ENCODE measurements at regions of chr12 and their contacts with region 1.

Region 1: GRCh38 chr12:153080-153746 is 60.7 kb downstream of the SLC6A12 start:
- DNase-seq: peak; percentile 79 to 90
- ATAC-seq: peak; percentile 89 to 98
- H3K4me3 ChIP-seq: no peak overlapping the region
- H3K27ac ChIP-seq: no peak overlapping the region
- H3K4me1 ChIP-seq: no peaks in the 10 kb centered on the region
- CTCF ChIP-seq: peak; percentile 76
- EP300 ChIP-seq: no peak
- POLR2A ChIP-seq: no peak
- RAD21 ChIP-seq: peak; percentile 68 to 80

Region 2: DNA sequence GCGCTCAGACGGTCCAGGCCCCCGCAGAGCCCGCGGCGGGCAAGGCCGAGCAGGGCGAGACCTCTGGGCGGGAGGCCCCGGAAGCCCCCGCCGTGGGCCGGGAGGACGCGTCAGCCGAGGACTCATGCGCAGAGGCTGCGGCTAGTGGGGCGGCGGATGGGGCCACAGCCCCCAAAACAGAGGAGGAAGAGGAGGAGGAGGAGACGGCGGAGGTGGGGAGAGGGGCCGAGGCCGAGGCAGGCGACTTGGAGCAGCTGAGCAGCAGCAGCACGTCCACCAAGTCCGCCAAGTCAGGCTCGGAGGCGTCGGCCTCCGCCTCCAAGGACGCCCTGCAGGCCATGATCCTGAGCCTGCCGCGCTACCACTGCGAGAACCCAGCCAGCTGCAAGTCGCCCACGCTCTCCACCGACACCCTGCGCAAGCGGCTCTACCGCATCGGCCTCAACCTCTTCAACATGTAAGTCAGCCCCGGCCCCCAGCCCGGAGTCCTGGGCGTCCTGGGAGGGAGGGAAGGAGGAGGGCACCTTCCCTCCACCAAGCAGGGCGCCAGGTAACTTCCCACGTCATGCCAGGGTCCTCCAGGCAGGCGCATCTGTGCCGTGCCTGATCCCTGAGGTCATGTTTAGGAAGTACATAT is 14.2 kb before region 1 on chr12:
- CTCF ChIA-PET with region 1: interaction called, 22 read pairs
- POLR2A ChIA-PET with region 1: no interaction called
- DNase-seq: no peak
- ATAC-seq: no peak
- H3K4me3 ChIP-seq: no peak overlapping the region
- H3K27ac ChIP-seq: no peak overlapping the region
- H3K4me1 ChIP-seq: no peaks in the 10 kb centered on the region
- CTCF ChIP-seq: no peak
- EP300 ChIP-seq: no peak
- POLR2A ChIP-seq: no peak
- RAD21 ChIP-seq: no peak

Region 3: DNA sequence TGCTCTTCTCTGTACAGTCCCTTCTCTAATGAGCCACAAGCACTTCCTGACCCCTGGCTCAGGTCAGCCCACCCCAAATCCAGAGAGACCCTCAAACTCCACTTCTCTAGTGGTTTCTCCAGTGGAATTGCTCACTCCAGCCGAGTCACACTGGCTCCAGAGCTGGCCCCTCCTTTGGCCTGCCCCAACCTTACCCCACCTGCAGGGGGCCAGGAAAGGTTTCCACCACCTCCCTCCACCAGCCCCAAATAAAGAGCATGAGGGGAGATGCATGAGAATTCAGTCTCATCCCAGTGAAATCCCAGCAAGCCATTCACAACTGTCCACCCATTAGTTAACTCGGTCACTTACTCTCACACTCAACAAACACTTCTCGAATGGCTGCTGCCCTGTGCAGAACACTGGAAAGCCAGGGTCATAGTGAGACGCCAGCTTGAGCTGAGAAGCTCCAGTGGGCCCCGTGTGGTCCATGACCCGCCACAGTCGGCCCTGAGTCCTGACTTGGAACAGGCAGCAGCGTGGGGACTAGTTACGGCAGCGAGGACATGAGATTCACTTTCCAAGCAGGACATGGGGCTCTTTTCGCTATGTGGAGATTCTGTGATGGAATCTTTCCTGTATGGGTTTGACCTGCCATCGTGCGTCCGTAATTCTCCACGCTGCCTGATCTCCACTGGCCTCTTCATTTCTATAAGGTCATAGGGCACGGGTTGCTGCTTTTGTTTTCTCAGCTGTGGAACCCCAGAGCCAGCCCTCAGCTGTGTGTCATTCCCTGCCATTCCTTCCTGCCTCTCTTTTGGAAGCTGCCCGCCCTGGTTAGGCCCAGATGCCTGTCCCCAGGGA is 16.5 kb after region 1 on chr12:
- CTCF ChIA-PET with region 1: interaction called, 17 read pairs
- POLR2A ChIA-PET with region 1: no interaction called
- DNase-seq: no peak
- ATAC-seq: peak; percentile 57 to 74; a peak in 5 of 6 replicates
- H3K4me3 ChIP-seq: no peak overlapping the region
- H3K27ac ChIP-seq: no peak overlapping the region
- H3K4me1 ChIP-seq: no peaks in the 10 kb centered on the region
- CTCF ChIP-seq: no peak
- EP300 ChIP-seq: no peak
- POLR2A ChIP-seq: no peak
- RAD21 ChIP-seq: no peak

Region 4: DNA sequence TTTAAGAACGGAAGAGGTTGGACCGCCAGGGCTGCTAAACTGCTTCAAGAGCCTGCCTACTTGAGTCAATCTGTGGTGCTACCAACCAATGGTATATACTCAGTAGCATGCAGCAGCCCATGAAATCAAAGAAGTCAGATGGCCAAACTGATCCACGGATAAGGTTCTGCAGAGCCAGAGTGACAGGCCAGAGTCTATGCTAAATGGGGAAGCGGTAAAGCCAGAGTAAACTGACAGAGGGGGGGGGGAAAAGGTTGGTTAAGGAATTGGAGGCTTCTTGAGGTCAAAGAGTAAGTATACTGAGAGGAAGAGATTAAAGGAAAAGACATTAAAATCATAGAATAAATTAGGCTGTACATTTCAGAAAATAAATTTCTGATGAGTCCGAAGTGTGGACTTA is 124.8 kb after region 1 on chr12:
- CTCF ChIA-PET with region 1: no interaction called
- POLR2A ChIA-PET with region 1: no interaction called
- DNase-seq: no peak
- ATAC-seq: no peak
- H3K4me3 ChIP-seq: no peak overlapping the region
- H3K27ac ChIP-seq: no peak overlapping the region
- H3K4me1 ChIP-seq: no peaks in the 10 kb centered on the region
- CTCF ChIP-seq: no peak
- EP300 ChIP-seq: no peak
- POLR2A ChIP-seq: no peak
- RAD21 ChIP-seq: no peak

Measured in A549 (cell line).